ENCODE measurements at regions of chrX and their contacts with region 1.

Region 1: GRCh38 chrX:125132285-125132684 is 187.4 kb upstream of the TEX13C start:
- DNase-seq: no peak
- ATAC-seq: peak; percentile 65; the same call in 2 of the 3 replicates
- H3K4me3 ChIP-seq: no peak overlapping the region
- H3K27ac ChIP-seq: no peak overlapping the region
- H3K4me1 ChIP-seq: no peaks in the 10 kb centered on the region
- H3K27me3 ChIP-seq: no peaks in the 10 kb centered on the region
- CTCF ChIP-seq: peak; percentile 25 to 53 (median 42); a peak in 4 of 6 replicates
- EP300 ChIP-seq: no peak
- POLR2A ChIP-seq: no peak
- RAD21 ChIP-seq: peak; percentile 39; the same call in 1 of the 2 replicates

Region 2: GRCh38 chrX:125150231-125150630 is 17.9 kb after region 1 on chrX:
- CTCF ChIA-PET with region 1: interaction called, 12 read pairs
- POLR2A ChIA-PET with region 1: no interaction called
- RAD21 ChIA-PET with region 1: no interaction called
- SMC1A ChIA-PET with region 1: interaction called, 3 read pairs
- in situ Hi-C with region 1: no loop called
- intact Hi-C with region 1: no loop called
- DNase-seq: no peak
- ATAC-seq: no peak
- H3K4me3 ChIP-seq: no peak overlapping the region
- H3K27ac ChIP-seq: no peak overlapping the region
- H3K4me1 ChIP-seq: no peaks in the 10 kb centered on the region
- H3K27me3 ChIP-seq: no peaks in the 10 kb centered on the region
- CTCF ChIP-seq: no peak
- EP300 ChIP-seq: no peak
- POLR2A ChIP-seq: no peak
- RAD21 ChIP-seq: no peak